ENCODE measurements at regions of chr1 and their contacts with region 1.

Region 1: GRCh38 chr1:110619412-110620249 is 13.5 kb upstream of the KCNA2 start:
- DNase-seq: peak; percentile 98
- H3K4me3 ChIP-seq: peak overlapping the region in 7 of 8 donors; percentile 29 to 75 (median 40)
- H3K27ac ChIP-seq: peak overlapping the region; percentile 71 to 91 (median 82)
- H3K4me1 ChIP-seq: peaks cover 7 to 38% (median 20%) of the 10 kb centered on the region in 6 donors
- H3K27me3 ChIP-seq: peaks cover 0 to 26% (median 4%) of the 10 kb centered on the region in 7 donors
- CTCF ChIP-seq: peak; percentile 88 to 97 (median 96)
- POLR2A ChIP-seq: peak in 1 of 3 donors; percentile 1

Region 2: GRCh38 chr1:110524311-110525251 is 95.0 kb before region 1 on chr1:
- intact Hi-C with region 1: loop called (anchors 10 kb)
- DNase-seq: no peak
- H3K4me3 ChIP-seq: peak overlapping the region in 2 of 8 donors; percentile 12 to 42
- H3K27ac ChIP-seq: no peak overlapping the region
- H3K4me1 ChIP-seq: peaks cover 0 to 15% (median 10%) of the 10 kb centered on the region in 6 donors
- H3K27me3 ChIP-seq: peaks cover 0 to 36% (median 3%) of the 10 kb centered on the region in 7 donors
- CTCF ChIP-seq: peak in 10 of 11 experiments; percentile 8 to 73 (median 62)
- POLR2A ChIP-seq: no peak

Region 3: DNA sequence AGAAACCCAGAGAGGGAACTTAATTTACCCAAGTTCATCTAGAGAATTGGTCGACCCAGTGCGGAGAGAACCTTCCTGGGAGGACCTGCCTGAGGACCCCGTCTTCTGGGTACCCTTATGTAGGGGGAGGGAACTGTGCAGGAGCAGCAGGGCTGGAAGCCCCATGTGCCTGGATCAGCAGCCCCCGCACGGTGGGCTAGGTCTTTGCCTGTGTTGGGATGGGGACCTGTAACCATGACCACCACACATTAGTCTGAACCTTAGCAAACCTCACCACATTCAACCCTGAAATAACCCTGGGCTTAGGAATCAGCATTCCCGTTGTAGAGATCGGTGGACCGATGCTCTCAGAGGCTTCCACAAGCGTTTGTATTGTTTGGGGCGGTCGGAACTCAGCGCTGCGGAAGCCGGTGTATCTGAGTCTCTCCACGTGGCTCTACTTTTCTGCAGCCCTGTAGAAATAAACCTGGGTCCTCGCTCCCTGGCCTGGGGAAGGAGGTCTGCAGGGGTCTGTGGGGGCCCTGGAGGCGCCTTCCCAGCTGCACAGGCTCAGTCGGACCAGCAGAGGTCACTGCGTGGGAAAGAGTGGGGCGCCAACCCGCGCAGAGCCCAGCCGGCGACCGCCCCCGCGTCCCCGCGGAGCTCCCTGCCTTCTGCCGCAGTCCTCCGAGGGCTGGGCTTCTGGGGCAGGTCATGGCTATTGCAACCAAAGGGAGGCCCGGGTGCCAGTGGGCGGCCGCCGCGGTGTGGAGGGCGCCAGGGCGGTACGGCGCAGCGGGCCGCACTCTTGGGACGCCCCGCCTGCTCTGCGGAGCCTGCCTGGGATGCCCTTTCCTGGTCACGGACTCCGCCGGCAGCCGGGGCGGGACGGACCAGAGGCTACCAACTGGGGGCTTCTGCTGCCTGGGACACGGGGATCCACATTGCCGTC is 64.5 kb before region 1 on chr1:
- intact Hi-C with region 1: loop called (anchors 10 kb)
- DNase-seq: peak; percentile 86
- H3K4me3 ChIP-seq: peak overlapping the region; percentile 18 to 67 (median 34)
- H3K27ac ChIP-seq: no peak overlapping the region
- H3K4me1 ChIP-seq: peaks cover 0 to 15% (median 11%) of the 10 kb centered on the region in 6 donors
- H3K27me3 ChIP-seq: peaks cover 4 to 81% (median 20%) of the 10 kb centered on the region in 7 donors
- CTCF ChIP-seq: peak in 10 of 11 experiments; percentile 40 to 88 (median 80)
- POLR2A ChIP-seq: no peak

Region 4: GRCh38 chr1:110674337-110675059 is 54.9 kb after region 1 on chr1 and contains the start of gene KCNA3:
- intact Hi-C with region 1: loop called (anchors 10 kb)
- DNase-seq: peak; percentile 87
- H3K4me3 ChIP-seq: peak within 1 kb of the TSS; percentile 48 to 82 (median 60)
- H3K27ac ChIP-seq: peak within 1 kb of the TSS; percentile 70 to 95 (median 87)
- H3K4me1 ChIP-seq: peaks cover 4 to 71% (median 46%) of the 10 kb centered on the region in 6 donors
- H3K27me3 ChIP-seq: peaks cover 0 to 54% (median 35%) of the 10 kb centered on the region in 7 donors
- CTCF ChIP-seq: peak in 2 of 11 experiments; percentile 18 to 40
- POLR2A ChIP-seq: no peak
- total RNA-seq, gene KCNA3: 20.4 to 45.8 (median 28.4) TPM

Measured in spleen (tissue), 13 donors.